Breast epithelium (tissue), 4 donors: ENCODE measurements at regions of chr19 and their contacts with region 1.

Region 1: GRCh38 chr19:46856050-46857022 is 4.5 kb upstream of the ARHGAP35 start:
- DNase-seq: peak; percentile 96 to 98
- H3K4me3 ChIP-seq: peak overlapping the region; percentile 35 to 58 (median 46)
- H3K27ac ChIP-seq: peak overlapping the region; percentile 67 to 92
- H3K4me1 ChIP-seq: peaks cover 0 to 4% of the 10 kb centered on the region in 2 donors
- H3K27me3 ChIP-seq: no peaks in the 10 kb centered on the region
- CTCF ChIP-seq: peak in 2 of 3 donors; percentile 62 to 68
- POLR2A ChIP-seq: no peak

Region 2: DNA sequence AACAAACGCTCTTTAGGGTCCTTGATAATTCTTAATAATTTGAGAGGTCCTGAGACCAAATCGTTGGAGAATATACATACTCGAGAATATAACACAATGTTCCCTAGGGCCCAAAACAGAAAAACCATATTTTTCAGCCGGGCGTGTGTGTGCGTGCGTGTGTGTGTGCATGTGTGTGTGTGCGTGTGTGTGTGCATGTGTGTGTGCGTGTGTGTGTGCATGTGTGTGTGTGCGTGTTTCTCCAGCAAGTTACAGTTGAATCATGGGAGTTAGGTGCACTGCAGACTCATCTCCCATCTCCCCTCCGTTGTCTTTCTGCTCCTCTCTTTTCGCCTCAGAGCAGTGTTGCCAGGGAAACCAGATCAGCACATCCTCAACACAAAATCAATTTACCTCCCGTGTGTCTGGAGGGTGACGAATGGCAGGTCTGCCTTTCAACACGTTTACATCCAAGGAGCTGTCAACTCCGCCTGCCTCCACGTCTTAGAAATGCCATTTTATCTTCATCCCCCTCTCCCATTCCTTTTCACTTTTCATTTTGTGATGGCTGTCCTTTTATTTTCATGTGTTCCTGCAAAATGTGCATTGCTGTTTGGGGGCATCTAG is 352.4 kb before region 1 on chr19:
- intact Hi-C with region 1: no loop called
- DNase-seq: no peak
- H3K4me3 ChIP-seq: no peak overlapping the region
- H3K27ac ChIP-seq: no peak overlapping the region
- H3K4me1 ChIP-seq: no peaks in the 10 kb centered on the region
- H3K27me3 ChIP-seq: no peaks in the 10 kb centered on the region
- CTCF ChIP-seq: no peak
- POLR2A ChIP-seq: no peak

Region 3: GRCh38 chr19:46913852-46914430 is 57.6 kb after region 1 on chr19:
- intact Hi-C with region 1: loop called (anchors 2 kb)
- DNase-seq: no peak
- H3K4me3 ChIP-seq: no peak overlapping the region
- H3K27ac ChIP-seq: peak overlapping the region in 1 of 2 donors; percentile 19
- H3K4me1 ChIP-seq: no peaks in the 10 kb centered on the region
- H3K27me3 ChIP-seq: no peaks in the 10 kb centered on the region
- CTCF ChIP-seq: no peak
- POLR2A ChIP-seq: no peak

Region 4: GRCh38 chr19:46990991-46991676 is 134.8 kb after region 1 on chr19:
- intact Hi-C with region 1: loop called (anchors 5 kb)
- DNase-seq: peak; percentile 75 to 78
- H3K4me3 ChIP-seq: no peak overlapping the region
- H3K27ac ChIP-seq: peak overlapping the region; percentile 18 to 68
- H3K4me1 ChIP-seq: peaks cover 0 to 3% of the 10 kb centered on the region in 2 donors
- H3K27me3 ChIP-seq: no peaks in the 10 kb centered on the region
- CTCF ChIP-seq: peak; percentile 76 to 87 (median 76)
- POLR2A ChIP-seq: no peak